PC-3 (cell line): ENCODE measurements at regions of chr15 and their contacts with region 1.

Region 1: DNA sequence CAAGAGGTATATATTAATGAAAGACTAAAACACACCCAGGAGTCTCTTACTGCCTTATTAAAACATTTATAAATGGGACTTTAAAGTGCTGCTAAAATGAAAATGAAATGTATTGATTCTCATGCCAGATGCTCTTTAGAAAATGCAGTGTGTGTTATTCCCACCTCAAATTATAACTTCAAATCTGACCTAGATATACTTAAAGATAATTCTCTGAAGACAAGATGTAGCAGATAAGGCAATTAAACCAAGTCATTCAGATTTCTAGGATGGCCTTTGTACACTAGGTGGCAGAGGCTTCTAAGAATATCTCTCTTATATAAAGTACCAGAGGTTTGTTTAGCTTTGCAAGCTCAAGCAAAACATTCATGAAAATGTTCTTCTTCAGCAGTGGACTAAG is 26.9 kb upstream of the GOLGA8B start:
- DNase-seq: peak; percentile 56
- ATAC-seq: peak; percentile 94
- H3K4me3 ChIP-seq: no peak overlapping the region
- H3K27ac ChIP-seq: no peak overlapping the region
- H3K4me1 ChIP-seq: no peaks in the 10 kb centered on the region
- H3K27me3 ChIP-seq: peaks cover 62% of the 10 kb centered on the region
- CTCF ChIP-seq: peak; percentile 67

Region 2: DNA sequence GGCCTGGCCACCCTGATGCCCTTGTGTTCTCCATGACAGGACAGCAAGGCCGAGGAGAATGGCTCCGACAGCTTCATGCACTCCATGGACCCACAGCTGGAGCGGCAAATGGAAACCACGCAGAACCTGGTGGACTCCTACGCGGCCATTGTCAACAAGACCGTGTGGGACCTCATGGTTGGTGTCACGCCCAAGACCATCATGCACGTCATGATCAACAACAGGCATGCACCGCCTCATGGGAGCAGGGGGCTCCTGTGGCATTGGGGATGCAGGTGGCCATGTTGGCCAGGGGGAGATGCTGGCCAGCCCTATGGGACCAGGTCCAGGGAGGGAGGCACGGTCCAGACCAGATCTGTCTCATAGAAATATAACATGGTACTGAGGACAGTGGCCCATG is 89.8 kb before region 1 on chr15:
- CTCF ChIA-PET with region 1: no interaction called
- POLR2A ChIA-PET with region 1: no interaction called
- intact Hi-C with region 1: no loop called
- DNase-seq: no peak
- ATAC-seq: no peak
- H3K4me3 ChIP-seq: no peak overlapping the region
- H3K27ac ChIP-seq: no peak overlapping the region
- H3K4me1 ChIP-seq: no peaks in the 10 kb centered on the region
- H3K27me3 ChIP-seq: no peaks in the 10 kb centered on the region
- CTCF ChIP-seq: no peak

Region 3: GRCh38 chr15:34621675-34622074 is 11.3 kb after region 1 on chr15:
- CTCF ChIA-PET with region 1: interaction called, 13 read pairs
- POLR2A ChIA-PET with region 1: no interaction called
- intact Hi-C with region 1: no loop called
- DNase-seq: peak; percentile 64
- ATAC-seq: peak; percentile 79
- H3K4me3 ChIP-seq: no peak overlapping the region
- H3K27ac ChIP-seq: no peak overlapping the region
- H3K4me1 ChIP-seq: peaks cover 12% of the 10 kb centered on the region
- H3K27me3 ChIP-seq: peaks cover 13% of the 10 kb centered on the region
- CTCF ChIP-seq: peak; percentile 85

Region 4: GRCh38 chr15:34810455-34811146 is 200.2 kb after region 1 on chr15:
- CTCF ChIA-PET with region 1: no interaction called
- POLR2A ChIA-PET with region 1: no interaction called
- intact Hi-C with region 1: no loop called
- DNase-seq: peak; percentile 64
- ATAC-seq: peak; percentile 76
- H3K4me3 ChIP-seq: no peak overlapping the region
- H3K27ac ChIP-seq: peak overlapping the region; percentile 47
- H3K4me1 ChIP-seq: peaks cover 12% of the 10 kb centered on the region; the same call in 1 of the 2 replicates
- H3K27me3 ChIP-seq: 0 out of 2 replicates have a peak, but pooled peaks cover 3% of the 10 kb centered on the region
- CTCF ChIP-seq: no peak